Activated CD4-positive, alpha-beta T cell treated with anti-CD3 and anti-CD28 coated beads for 36 hours (primary cell): ENCODE measurements at regions of chr19 and their contacts with region 1.

Region 1: DNA sequence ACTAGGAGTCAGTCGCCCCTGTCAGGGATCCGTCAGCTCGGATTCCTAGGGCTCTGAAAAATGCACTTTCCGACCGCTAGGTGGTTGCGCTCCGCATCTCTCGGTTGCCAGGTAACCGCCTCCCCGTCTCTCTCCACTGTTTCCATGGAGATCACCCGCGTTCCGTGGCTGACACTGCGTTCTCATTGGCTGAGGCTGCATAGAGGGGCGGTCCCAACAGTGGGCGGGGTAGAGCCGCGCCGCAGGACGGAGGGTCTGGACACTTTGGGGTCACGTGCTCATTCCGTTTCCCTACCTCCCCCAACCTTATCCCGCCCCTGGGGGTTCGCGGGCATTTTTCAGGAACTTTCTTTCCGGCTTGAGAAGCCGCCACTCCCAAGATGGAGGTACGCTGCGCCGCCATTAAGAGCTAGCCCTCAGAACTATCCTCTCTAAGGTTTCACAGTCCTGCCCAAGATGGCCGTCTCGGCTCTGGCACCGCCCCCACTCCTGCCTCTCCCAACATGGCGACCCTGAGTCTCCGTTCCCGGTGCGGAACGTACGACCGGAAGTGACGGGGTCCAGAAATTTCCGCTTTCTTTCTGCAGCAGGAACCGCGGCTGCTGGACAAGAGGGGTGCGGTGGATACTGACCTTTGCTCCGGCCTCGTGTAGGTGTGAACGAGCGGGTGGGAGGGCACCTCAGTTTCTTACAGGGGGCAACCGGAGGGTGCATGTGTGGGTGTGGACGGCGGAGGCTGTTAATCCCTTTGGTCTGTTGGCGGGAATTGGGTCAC is at the starts of genes ODAD3 and PRKCSH:
- DNase-seq: peak; percentile 99
- ATAC-seq: peak; percentile 96
- H3K4me3 Mint-ChIP-seq: peak within 1 kb of the TSS; percentile 98
- H3K27ac Mint-ChIP-seq: peak within 1 kb of the TSS; percentile 99
- H3K4me1 Mint-ChIP-seq: peaks cover 14% of the 10 kb centered on the region
- H3K27me3 Mint-ChIP-seq: no peaks in the 10 kb centered on the region
- total RNA-seq, gene ODAD3: 0.16 to 0.25 TPM
- total RNA-seq, gene PRKCSH: 225 to 269 TPM

Region 2: DNA sequence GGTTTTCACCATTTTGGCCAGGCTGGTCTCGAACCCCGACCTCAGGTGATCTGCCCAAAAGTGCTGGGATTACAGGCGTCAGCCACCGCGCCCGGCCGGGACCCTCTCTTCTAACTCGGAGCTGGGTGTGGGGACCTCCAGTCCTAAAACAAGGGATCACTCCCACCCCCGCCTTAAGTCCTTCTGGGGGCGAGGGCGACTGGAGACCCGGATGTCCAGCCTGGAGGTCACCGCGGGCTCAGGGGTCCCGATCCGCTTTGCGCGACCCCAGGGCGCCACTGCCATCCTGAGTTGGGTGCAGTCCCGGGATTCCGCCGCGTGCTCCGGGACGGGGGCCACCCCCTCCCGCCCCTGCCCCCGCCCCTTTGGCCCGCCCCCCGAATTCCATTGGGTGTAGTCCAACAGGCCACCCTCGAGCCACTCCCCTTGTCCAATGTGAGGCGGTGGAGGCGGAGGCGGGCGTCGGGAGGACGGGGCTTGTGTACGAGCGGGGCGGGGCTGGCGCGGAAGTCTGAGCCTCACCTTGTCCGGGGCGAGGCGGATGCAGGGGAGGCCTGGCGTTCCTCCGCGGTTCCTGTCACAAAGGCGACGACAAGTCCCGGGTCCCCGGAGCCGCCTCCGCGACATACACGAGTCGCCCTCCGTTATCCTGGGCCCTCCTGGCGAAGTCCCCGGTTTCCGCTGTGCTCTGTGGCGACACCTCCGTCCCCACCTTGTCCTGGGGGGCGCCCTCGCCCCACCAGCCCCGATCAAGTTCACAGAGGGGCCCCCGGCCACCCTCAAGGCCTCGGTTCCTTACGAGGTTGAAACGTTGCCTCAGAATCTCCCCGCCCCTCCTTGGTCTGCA is 345.0 kb before region 1 on chr19:
- CTCF ChIA-PET with region 1: no interaction called
- POLR2A ChIA-PET with region 1: no interaction called
- intact Hi-C with region 1: loop called in 1 of 2 experiments (anchors 1 kb)
- DNase-seq: peak; percentile 99
- ATAC-seq: peak; percentile 88
- H3K4me3 Mint-ChIP-seq: peak overlapping the region; percentile 93
- H3K27ac Mint-ChIP-seq: peak overlapping the region; percentile 97
- H3K4me1 Mint-ChIP-seq: peaks cover 51% of the 10 kb centered on the region
- H3K27me3 Mint-ChIP-seq: no peaks in the 10 kb centered on the region

Region 3: GRCh38 chr19:11346092-11346940 is 88.9 kb before region 1 on chr19 and contains the starts of genes CCDC159 and TMEM205:
- CTCF ChIA-PET with region 1: interaction called, 3 read pairs
- POLR2A ChIA-PET with region 1: no interaction called
- intact Hi-C with region 1: loop called (anchors 1 kb)
- DNase-seq: peak; percentile 99
- ATAC-seq: peak; percentile 99
- H3K4me3 Mint-ChIP-seq: peak within 1 kb of the TSS; percentile 83
- H3K27ac Mint-ChIP-seq: peak within 1 kb of the TSS; percentile 82
- H3K4me1 Mint-ChIP-seq: peaks cover 23% of the 10 kb centered on the region
- H3K27me3 Mint-ChIP-seq: no peaks in the 10 kb centered on the region
- total RNA-seq, gene CCDC159: 15.3 to 18.0 TPM
- total RNA-seq, gene TMEM205: 28.0 to 32.6 TPM

Region 4: DNA sequence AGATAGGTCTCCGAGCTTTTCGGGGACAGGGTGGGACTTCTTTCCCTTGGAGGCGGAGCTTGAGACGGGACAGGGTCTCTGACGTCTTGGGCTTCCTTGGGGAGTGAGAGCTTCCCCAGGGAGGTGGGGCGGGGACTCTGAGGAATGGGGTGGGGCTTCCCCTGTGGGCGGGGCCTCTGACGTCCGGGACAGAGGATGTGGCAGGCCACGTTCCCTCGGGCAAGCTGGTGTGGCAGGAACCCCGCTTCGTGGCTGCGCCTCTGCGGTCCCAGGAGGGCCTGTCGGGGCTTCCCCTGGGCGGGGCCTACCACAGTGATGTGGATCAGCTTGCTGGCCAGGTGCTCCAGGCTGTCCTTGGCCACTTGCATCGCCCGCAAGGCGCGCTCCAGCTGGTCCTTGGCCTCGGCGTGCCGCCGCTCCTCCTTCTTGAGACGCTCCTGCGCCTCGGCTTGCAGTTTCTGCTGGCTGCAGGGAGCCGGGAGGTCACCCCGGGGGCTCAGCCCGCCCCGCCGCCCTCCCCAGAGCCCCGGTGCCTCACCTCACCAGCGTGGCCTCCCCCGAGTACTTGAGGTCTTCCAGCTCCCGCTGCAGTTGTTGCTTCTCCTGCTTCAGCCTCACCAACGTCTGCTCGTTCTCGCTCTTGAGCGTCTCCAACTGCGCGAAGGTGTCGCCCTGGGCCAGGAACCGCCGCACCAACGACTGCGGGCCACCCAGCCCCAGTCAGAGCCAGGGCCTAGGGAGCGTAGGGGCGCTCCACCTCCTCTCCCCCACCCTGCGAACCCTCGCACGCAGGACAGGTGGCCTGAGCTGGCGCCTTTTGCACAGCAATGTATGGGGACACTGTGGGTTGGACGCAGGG is 12.9 kb before region 1 on chr19:
- CTCF ChIA-PET with region 1: interaction called, 27 read pairs
- POLR2A ChIA-PET with region 1: interaction called, 3 read pairs
- intact Hi-C with region 1: no loop called
- DNase-seq: peak; percentile 82
- ATAC-seq: peak; percentile 78
- H3K4me3 Mint-ChIP-seq: peak overlapping the region; percentile 52
- H3K27ac Mint-ChIP-seq: no peak overlapping the region
- H3K4me1 Mint-ChIP-seq: peaks cover 31% of the 10 kb centered on the region
- H3K27me3 Mint-ChIP-seq: peaks cover 54% of the 10 kb centered on the region

Region 5: DNA sequence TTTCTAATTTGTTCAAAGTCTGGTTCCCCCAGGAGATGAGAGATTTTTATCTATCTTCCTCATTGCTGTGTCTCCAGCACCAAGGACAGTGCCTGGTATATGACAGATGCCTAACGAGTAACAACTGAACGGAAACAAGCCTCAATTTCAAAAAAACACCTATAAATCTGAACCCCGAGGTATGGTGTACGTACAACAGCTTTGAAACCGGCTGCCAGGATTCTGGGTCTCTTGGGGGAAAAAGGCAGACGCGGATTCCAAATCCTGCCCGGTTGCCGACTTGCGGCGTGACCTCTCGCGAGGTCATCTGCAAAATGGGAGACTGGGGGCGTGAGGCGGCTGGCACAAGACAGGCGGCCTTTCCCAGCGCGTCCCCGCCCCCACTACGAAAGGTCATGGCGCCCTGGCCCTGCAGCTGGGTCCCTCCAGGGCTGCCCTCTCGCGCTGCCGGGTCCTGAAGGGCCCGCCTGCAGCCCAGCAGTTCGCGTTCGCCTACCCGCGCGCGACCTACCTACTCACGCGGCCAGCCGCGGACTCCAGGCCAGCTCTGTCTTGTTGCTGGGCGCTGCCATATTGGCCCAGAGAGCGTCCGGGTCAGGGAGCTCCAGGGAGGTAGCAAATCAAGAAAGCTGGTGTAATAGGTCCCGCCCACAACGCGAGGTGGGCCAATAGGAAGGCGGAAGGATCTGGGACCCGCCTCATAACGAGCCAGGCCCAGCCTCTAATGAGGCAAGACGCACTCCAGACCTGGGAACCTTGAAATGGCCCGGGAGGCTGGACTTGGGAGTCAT is 93.5 kb after region 1 on chr19 and contains the start of gene ECSIT:
- CTCF ChIA-PET with region 1: interaction called, 6 read pairs
- POLR2A ChIA-PET with region 1: no interaction called
- intact Hi-C with region 1: loop called in 1 of 2 experiments (anchors 1 kb)
- DNase-seq: peak; percentile 97
- ATAC-seq: peak; percentile 97
- H3K4me3 Mint-ChIP-seq: peak within 1 kb of the TSS; percentile 99
- H3K27ac Mint-ChIP-seq: peak within 1 kb of the TSS; percentile 96
- H3K4me1 Mint-ChIP-seq: peaks cover 28% of the 10 kb centered on the region
- H3K27me3 Mint-ChIP-seq: no peaks in the 10 kb centered on the region
- total RNA-seq, gene ECSIT: 37.2 to 44.6 TPM

Region 6: GRCh38 chr19:11738746-11739620 is 303.7 kb after region 1 on chr19 and contains the start of gene ZNF823:
- CTCF ChIA-PET with region 1: no interaction called
- POLR2A ChIA-PET with region 1: no interaction called
- intact Hi-C with region 1: loop called in 1 of 2 experiments (anchors 5 kb)
- DNase-seq: peak; percentile 99
- ATAC-seq: peak; percentile 100
- H3K4me3 Mint-ChIP-seq: peak within 1 kb of the TSS; percentile 99
- H3K27ac Mint-ChIP-seq: peak within 1 kb of the TSS; percentile 92
- H3K4me1 Mint-ChIP-seq: peaks cover 16% of the 10 kb centered on the region
- H3K27me3 Mint-ChIP-seq: no peaks in the 10 kb centered on the region
- total RNA-seq, gene ZNF823: 2.9 to 3.0 TPM